HEK293 (cell line): ENCODE measurements at regions of chr5 and their contacts with region 1.

Region 1: DNA sequence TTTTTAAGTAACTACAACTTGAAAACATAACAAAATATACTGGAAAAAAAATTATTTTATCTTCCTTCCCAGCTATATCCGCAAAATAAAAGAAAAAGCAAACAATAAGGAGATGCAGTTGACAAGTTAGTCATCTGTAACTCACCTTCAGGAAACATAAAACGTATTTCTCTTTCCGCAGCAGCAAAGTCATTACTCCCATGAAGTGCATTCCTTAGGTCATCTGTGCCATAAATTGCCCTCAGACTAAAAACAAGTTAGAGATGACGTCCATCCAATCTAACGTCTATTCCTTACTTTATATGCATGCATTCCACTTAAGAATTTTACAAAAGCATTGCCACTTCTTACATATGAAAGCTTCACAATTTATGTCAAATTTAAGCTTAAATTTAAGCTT is 10.9 kb downstream of the NME5 start:
- H3K4me3 ChIP-seq: no peak overlapping the region
- H3K27ac ChIP-seq: no peak overlapping the region
- H3K4me1 ChIP-seq: peaks cover 12% of the 10 kb centered on the region
- CTCF ChIP-seq: no peak

Region 2: DNA sequence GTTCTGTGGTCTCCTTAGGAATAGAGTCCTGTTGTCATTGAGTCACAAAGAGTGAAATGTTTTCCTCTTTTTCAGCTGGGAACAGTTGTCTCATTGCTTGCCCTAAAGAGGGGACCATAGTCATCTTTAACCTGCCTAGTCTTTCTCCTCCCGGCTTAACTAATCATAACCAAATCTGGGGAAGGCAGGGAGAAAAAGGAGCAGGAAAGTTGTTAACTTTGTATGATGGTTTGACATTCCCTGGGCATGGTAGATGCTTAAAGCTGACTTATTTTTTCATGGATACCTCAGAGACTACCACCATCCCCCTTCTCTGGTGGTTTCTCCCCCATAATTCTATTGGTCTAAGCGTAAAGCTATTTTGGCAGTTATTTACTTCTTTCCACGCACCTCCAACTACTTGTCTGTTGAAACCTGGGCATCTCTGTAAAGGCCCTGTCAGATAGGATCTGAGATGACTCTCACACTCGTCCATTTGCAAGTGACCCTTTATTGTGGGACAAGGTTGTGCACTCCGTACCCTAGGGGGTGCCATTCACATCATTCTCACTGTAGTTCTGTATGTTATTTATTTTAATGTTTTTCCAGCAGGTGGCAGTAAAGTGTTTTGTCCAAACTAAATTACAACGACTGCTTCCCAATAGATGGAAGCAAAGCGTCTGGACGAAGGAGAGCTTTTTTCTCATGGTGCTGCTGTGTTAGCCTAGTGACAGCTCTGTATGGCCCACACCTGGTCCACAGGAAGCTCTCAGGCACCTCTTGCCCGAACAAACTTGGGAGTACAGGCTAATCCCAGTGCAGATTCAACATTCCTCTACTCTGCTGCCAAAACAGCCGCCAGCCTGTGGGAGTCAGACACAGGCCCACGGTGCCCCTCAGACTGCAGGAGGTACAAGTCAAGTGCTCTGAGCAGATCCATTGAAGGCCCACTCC is 92.5 kb before region 1 on chr5:
- CTCF ChIA-PET with region 1: interaction called, 18 read pairs
- POLR2A ChIA-PET with region 1: no interaction called
- H3K4me3 ChIP-seq: no peak overlapping the region
- H3K27ac ChIP-seq: no peak overlapping the region
- H3K4me1 ChIP-seq: no peaks in the 10 kb centered on the region
- CTCF ChIP-seq: peak; percentile 90

Region 3: DNA sequence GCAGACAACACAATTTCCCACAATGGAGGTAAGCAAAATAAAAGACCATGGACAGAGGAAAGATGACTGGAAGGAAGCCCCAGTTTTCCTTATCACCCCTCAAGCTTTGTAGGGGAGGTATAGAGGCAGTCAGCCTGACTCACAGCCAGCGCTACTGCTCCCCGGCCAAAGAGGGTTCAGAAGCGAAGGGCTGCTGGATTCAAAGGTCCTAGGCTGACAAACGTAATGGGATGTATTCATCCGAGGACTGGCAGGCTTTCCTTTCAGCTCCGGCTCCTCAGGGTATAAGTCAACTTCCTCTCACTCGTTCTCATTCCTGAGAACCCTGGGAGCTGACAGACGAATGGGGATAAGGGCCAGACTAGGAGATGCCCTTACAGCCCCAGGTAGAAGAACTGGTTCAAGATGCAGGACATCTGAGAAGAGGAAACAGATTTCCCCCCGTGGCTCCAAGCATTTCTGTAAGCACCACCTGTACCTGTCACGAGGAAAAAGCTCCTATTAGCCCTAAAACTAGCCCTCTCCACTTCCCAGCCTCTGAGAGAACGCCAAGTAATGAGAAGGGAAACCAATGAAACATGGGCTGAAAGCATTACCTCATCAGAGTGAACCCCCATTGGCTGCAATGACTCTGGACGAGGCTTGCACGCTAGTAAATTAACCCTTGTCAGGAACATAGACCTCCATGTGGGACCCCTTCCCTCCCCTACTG is 73.3 kb before region 1 on chr5:
- CTCF ChIA-PET with region 1: interaction called, 10 read pairs
- POLR2A ChIA-PET with region 1: no interaction called
- H3K4me3 ChIP-seq: no peak overlapping the region
- H3K27ac ChIP-seq: no peak overlapping the region
- H3K4me1 ChIP-seq: no peaks in the 10 kb centered on the region
- CTCF ChIP-seq: no peak

Region 4: GRCh38 chr5:138083702-138084101 is 44.6 kb before region 1 on chr5 and contains the start of gene WNT8A:
- CTCF ChIA-PET with region 1: interaction called, 96 read pairs
- POLR2A ChIA-PET with region 1: no interaction called
- H3K4me3 ChIP-seq: no peak within 1 kb of the TSS
- H3K27ac ChIP-seq: no peak within 1 kb of the TSS
- H3K4me1 ChIP-seq: no peaks in the 10 kb centered on the region
- CTCF ChIP-seq: no peak

Region 5: DNA sequence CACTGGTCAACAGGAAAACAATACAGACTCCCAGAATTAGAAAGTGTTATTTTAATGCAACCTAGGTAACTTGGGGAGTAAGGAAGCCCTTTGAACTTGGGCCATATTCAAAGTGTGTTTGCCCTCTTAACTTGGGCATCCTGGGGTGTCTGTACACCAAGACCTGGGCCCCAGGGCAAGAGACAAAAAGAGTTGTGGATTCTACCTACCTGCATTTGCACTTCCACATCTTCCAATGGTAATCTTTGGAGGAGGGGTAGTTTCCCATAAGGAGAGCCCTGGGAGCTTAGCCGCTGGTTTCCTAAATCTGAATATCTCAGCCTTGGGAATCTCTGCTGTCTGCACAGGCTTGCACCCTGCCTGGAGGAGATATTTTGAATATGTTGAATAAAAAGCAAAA is 36.0 kb before region 1 on chr5:
- CTCF ChIA-PET with region 1: interaction called, 11 read pairs
- POLR2A ChIA-PET with region 1: no interaction called
- H3K4me3 ChIP-seq: no peak overlapping the region
- H3K27ac ChIP-seq: no peak overlapping the region
- H3K4me1 ChIP-seq: no peaks in the 10 kb centered on the region
- CTCF ChIP-seq: no peak